Gastrocnemius medialis (tissue), 4 donors: ENCODE measurements at regions of chr19 and their contacts with region 1.

Region 1: GRCh38 chr19:40716655-40717324 is at the starts of genes COQ8B and ITPKC:
- DNase-seq: peak; percentile 98 to 99
- ATAC-seq: peak; percentile 67 to 68
- H3K4me3 ChIP-seq: peak within 1 kb of the TSS; percentile 64 to 90 (median 85)
- H3K27ac ChIP-seq: peak within 1 kb of the TSS; percentile 89 to 98 (median 92)
- H3K4me1 ChIP-seq: peaks cover 36 to 47% of the 10 kb centered on the region in 2 donors
- H3K27me3 ChIP-seq: no peaks in the 10 kb centered on the region
- CTCF ChIP-seq: peak in 2 of 5 experiments; percentile 34 to 47
- POLR2A ChIP-seq: peak; percentile 93 to 94
- total RNA-seq, gene COQ8B: 14.9 to 30.7 (median 20.2) TPM
- total RNA-seq, gene ITPKC: 14.9 to 34.5 (median 21.8) TPM

Region 2: GRCh38 chr19:40378509-40378908 is 338.3 kb before region 1 on chr19:
- in situ Hi-C with region 1: no loop called
- intact Hi-C with region 1: no loop called
- DNase-seq: no peak
- ATAC-seq: no peak
- H3K4me3 ChIP-seq: no peak overlapping the region
- H3K27ac ChIP-seq: no peak overlapping the region
- H3K4me1 ChIP-seq: no peaks in the 10 kb centered on the region
- H3K27me3 ChIP-seq: no peaks in the 10 kb centered on the region
- CTCF ChIP-seq: no peak
- POLR2A ChIP-seq: no peak

Region 3: DNA sequence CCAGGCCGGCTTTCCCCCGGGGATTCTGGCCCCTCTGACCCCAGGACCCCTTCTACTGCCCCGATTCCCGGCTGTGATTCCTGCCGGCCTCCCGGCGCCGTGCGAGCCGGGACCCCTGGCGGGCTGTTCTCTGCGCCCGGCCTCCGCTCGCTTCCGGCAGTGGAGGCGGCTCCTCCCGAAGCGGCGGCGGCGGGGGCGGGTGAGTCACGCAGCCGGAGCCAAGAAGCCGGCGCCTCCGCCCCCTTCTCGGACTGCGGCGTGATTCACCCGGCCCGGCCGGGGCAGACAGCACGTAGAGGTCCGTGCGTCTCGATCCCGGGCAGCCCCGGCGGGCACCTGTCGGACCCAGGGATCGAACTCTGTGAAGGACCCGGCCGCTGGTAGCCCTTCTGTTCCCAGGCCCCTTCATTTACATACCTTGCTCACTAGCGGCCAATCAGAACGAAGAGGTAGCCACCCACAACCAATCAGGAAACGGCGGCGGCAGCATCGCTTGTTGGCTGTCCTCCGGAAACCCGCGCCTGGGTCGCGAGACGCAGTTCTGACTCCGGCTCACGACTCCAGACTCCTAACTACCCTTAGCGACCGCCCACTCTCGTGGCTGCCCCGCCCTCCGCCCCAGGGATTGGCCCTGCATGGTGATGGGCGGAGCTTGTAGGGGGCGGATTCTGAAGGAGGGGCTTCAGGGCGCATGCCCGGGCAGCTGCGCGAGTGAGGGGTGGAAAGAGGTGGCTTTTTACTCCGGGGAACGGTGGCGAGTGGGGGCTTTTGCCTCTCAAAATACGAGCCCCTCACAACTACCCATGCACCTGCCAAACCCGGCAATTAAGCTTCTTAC is 291.1 kb before region 1 on chr19 and contains the start of gene SERTAD1:
- in situ Hi-C with region 1: no loop called
- intact Hi-C with region 1: loop called (anchors 5 kb)
- DNase-seq: peak; percentile 99 to 100
- ATAC-seq: peak; percentile 82 to 87
- H3K4me3 ChIP-seq: peak within 1 kb of the TSS; percentile 78 to 94 (median 84)
- H3K27ac ChIP-seq: peak within 1 kb of the TSS; percentile 98 to 100 (median 99)
- H3K4me1 ChIP-seq: peaks cover 32 to 34% of the 10 kb centered on the region in 2 donors
- H3K27me3 ChIP-seq: no peaks in the 10 kb centered on the region
- CTCF ChIP-seq: peak in 4 of 5 experiments; percentile 66 to 97 (median 90)
- POLR2A ChIP-seq: peak; percentile 100
- total RNA-seq, gene SERTAD1: 15.3 to 18.3 (median 16.0) TPM

Region 4: GRCh38 chr19:40662921-40663694 is 53.7 kb before region 1 on chr19:
- in situ Hi-C with region 1: no loop called
- intact Hi-C with region 1: loop called (anchors 2 kb)
- DNase-seq: peak; percentile 84 to 85
- ATAC-seq: peak; percentile 88 to 89
- H3K4me3 ChIP-seq: peak overlapping the region; percentile 80 to 96 (median 86)
- H3K27ac ChIP-seq: peak overlapping the region; percentile 87 to 94 (median 92)
- H3K4me1 ChIP-seq: peaks cover 6 to 11% of the 10 kb centered on the region in 2 donors
- H3K27me3 ChIP-seq: no peaks in the 10 kb centered on the region
- CTCF ChIP-seq: peak; percentile 95 to 99 (median 99)
- POLR2A ChIP-seq: no peak

Region 5: GRCh38 chr19:40702337-40703012 is 14.3 kb before region 1 on chr19:
- in situ Hi-C with region 1: no loop called
- intact Hi-C with region 1: no loop called
- DNase-seq: no peak
- ATAC-seq: no peak
- H3K4me3 ChIP-seq: no peak overlapping the region
- H3K27ac ChIP-seq: no peak overlapping the region
- H3K4me1 ChIP-seq: no peaks in the 10 kb centered on the region
- H3K27me3 ChIP-seq: no peaks in the 10 kb centered on the region
- CTCF ChIP-seq: no peak
- POLR2A ChIP-seq: no peak

Region 6: DNA sequence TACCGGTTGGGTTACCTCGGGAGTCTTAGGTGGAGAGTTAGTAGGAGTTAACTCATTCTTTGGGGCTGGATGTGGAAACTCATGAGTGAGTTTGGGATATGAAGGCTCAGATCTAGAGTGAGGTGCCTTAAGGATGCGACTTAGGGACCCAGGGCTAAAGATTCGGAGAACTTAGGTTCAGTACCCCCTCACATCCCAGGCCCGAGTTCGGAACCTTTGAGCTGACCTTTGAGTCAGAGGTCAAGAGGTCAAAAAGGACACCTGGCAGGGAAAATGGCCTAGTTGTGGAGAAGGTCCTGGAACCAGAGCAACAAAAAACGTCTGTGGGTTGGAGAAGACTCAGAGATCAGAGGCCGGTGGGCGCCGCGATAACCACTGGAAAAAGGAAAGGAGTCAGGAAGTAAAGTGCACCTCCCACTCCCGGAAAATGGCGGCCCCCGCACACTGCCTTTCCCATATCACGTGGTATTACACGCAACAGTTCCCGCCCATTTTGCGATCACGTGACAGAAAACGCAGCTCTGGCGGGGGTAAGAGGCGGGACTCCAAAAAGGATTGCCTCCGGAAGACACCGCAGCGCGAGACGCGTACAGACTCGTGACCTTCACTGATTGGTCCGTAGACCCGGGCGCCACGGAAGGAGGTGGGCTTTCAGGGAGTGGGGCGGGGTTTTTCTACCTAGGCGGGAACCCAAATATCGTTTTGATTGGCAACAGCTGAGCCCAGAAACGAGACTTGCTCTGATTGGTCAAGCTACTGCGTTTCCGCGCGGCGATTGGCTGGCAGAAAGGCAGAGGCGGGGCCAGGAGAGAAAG is 33.5 kb after region 1 on chr19 and contains the start of gene ACTMAP:
- in situ Hi-C with region 1: no loop called
- intact Hi-C with region 1: loop called (anchors 1 kb)
- DNase-seq: peak; percentile 100
- ATAC-seq: peak; percentile 91 to 93
- H3K4me3 ChIP-seq: peak within 1 kb of the TSS; percentile 73 to 93 (median 84)
- H3K27ac ChIP-seq: peak within 1 kb of the TSS; percentile 92 to 98 (median 94)
- H3K4me1 ChIP-seq: peaks cover 35 to 38% of the 10 kb centered on the region in 2 donors
- H3K27me3 ChIP-seq: no peaks in the 10 kb centered on the region
- CTCF ChIP-seq: peak in 2 of 5 experiments; percentile 51 to 67
- POLR2A ChIP-seq: peak; percentile 82 to 92
- total RNA-seq, gene ACTMAP: 4.2 to 14.6 (median 6.2) TPM

Region 7: DNA sequence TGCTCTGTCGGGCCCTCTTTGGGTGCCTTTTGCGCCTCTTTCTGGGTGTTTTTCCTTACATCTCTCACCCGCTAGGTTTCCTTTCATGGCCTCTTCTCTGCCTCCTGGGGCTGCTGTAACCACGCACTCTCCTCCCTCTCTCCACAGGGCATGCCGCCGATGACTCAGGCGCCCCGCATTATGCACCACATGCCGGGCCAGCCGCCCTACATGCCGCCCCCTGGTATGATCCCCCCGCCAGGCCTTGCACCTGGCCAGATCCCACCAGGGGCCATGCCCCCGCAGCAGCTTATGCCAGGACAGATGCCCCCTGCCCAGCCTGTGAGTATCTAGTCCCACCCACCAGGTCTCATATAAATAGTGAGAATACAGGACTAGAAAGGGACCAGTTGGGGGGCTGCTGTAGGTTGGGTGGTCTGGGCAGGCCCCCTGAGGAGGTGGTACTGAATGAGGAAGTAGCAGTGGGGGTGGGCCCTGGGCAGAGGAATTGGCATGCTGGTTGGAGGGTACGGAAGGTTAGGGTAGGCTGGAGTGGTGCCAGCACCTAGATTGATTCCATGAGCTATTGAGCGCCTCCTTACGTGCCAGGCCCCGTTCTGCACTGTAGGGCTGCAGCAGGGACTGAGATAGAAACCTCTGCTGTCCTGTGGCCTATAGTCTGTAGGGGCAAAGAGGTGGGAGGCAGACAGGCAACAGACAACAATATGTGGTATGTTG is 46.1 kb after region 1 on chr19:
- in situ Hi-C with region 1: no loop called
- intact Hi-C with region 1: no loop called
- DNase-seq: no peak
- ATAC-seq: no peak
- H3K4me3 ChIP-seq: no peak overlapping the region
- H3K27ac ChIP-seq: no peak overlapping the region
- H3K4me1 ChIP-seq: no peaks in the 10 kb centered on the region
- H3K27me3 ChIP-seq: no peaks in the 10 kb centered on the region
- CTCF ChIP-seq: no peak
- POLR2A ChIP-seq: no peak

Region 8: DNA sequence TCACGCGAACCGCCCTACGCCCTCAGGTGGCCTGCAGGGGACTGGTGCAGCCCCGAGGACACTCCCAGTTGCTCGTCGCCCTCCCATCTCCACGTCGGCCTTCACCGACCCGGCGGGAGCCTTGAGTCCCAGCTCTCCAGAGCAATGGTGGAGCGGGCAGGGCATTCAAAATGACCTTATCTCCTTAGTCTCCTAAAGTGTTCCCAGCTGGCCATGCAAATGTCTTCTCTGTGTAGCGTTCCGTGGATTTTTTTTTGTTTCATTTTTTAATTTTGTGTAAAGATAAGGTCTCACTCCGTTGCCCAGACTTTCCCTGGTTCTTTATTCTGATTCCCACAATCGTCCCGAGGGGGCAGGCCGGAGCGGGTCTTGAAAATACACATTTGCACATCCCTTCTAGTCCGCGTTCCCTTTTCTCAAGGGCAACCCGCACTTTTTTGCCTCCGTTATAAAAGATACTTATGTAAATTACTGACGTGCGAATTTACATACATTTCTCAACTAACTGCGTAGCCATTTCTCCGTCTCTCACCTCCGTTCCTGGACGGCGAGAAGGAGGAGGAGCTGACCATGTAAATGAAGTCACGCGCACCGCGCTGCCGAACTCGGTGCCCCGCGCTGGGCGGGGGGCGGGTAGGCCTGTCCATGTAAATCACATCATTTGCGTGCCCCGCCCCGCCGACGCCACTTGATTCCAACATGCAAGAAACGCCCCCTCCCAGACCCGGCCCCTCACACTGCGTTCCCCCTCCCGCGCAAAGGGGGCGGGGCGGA is 81.6 kb after region 1 on chr19:
- in situ Hi-C with region 1: no loop called
- intact Hi-C with region 1: loop called (anchors 1 kb)
- DNase-seq: peak; percentile 100
- ATAC-seq: peak; percentile 17 to 83
- H3K4me3 ChIP-seq: peak overlapping the region; percentile 55 to 96 (median 63)
- H3K27ac ChIP-seq: peak overlapping the region; percentile 94 to 96 (median 96)
- H3K4me1 ChIP-seq: peaks cover 36 to 42% of the 10 kb centered on the region in 2 donors
- H3K27me3 ChIP-seq: no peaks in the 10 kb centered on the region
- CTCF ChIP-seq: peak; percentile 34 to 51 (median 49)
- POLR2A ChIP-seq: no peak